Esophagus squamous epithelium (tissue), 5 donors: ENCODE measurements at regions of chr15 and their contacts with region 1.

Region 1: GRCh38 chr15:55434989-55435825 is 26.9 kb downstream of the PIERCE2 start:
- DNase-seq: no peak
- H3K4me3 ChIP-seq: no peak overlapping the region
- H3K27ac ChIP-seq: no peak overlapping the region
- H3K4me1 ChIP-seq: no peaks in the 10 kb centered on the region
- H3K27me3 ChIP-seq: no peaks in the 10 kb centered on the region
- CTCF ChIP-seq: peak in 5 of 6 experiments; percentile 34 to 57 (median 38)
- POLR2A ChIP-seq: no peak

Region 2: DNA sequence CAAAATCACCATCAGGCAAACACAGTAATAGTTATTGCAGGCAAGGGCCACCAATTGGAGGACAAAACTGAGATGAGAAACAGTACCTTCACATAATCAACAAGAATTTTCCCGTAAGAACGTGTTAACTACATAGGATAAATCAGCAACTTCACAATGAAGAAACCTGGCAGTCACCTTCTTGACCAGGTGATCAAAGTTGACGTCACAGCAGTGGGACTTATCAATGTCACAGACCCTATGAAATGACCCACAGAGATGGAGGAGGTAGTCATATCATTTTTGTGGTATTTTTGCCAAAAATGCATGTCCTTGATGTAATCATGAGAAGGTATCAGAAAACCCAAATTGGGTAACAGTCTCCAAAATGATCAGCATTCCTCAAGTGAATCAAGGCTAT is 557.3 kb before region 1 on chr15:
- intact Hi-C with region 1: no loop called
- DNase-seq: no peak
- H3K4me3 ChIP-seq: no peak overlapping the region
- H3K27ac ChIP-seq: no peak overlapping the region
- H3K4me1 ChIP-seq: no peaks in the 10 kb centered on the region
- H3K27me3 ChIP-seq: no peaks in the 10 kb centered on the region
- CTCF ChIP-seq: no peak
- POLR2A ChIP-seq: no peak

Region 3: DNA sequence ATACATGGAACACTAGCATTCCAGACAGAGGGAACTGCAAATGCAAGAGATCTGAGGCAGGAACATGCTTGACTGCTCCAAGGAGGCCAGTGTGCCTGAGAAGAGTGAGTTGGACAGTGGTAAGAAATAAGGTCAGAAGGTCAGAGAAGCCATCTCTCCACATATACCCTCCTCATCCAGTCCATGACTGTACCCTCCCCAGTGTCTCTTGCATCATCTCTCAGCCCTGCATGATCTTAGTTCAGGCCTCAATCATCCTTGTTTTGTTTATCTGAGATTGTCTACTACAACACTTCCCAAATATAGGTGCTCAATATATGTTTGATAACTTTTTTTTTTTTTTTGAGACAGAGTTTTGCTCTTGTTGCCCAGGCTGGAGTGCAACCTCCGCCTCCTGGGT is 233.0 kb before region 1 on chr15:
- intact Hi-C with region 1: loop called (anchors 10 kb)
- DNase-seq: no peak
- H3K4me3 ChIP-seq: no peak overlapping the region
- H3K27ac ChIP-seq: no peak overlapping the region
- H3K4me1 ChIP-seq: peaks cover 0 to 10% (median 9%) of the 10 kb centered on the region in 3 donors
- H3K27me3 ChIP-seq: no peaks in the 10 kb centered on the region
- CTCF ChIP-seq: no peak
- POLR2A ChIP-seq: no peak